Aorta (tissue), 5 donors: ENCODE measurements at regions of chr2 and their contacts with region 1.

Region 1: DNA sequence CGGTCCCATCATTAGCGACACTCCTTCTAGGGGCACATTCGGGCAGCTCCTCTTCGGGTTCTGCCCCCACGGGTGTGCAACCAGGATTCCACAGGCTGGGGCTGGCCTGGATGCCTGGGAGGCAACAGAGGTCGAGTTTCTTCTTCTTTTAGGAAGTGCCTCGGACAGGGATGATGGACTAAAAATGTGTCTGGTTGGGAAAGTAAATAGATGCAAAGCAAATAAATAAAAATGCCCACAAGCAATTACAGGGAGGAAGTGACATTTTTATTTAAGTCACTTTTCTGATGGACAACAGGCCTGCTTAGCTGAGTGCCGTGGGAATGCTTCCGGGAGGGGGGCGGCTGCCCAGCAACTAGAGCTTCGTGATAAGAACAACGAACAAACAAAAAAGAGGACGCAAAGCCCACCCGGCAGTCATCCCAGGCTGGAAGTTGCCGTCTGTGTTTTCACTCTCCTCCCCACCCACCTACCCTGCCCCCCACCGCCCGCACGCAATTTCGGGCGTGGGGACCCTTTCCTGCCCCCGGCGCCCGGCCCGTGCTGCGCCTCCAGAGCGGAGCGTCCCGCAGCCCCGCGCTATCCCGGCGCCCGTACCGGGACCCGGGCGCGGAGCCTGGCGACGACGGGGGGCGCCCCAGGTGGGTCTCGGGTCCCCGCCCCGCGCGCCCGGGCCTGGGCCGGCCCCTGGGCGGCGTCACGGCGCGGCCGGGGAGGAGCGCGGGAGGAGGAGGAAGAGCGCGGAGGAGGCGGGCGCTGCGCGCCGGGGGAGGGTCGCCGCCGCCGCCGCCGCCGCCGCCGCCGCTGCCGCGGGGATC is 412 bp upstream of the NCK2 start:
- DNase-seq: peak; percentile 74 to 90
- ATAC-seq: peak; percentile 90
- H3K4me3 ChIP-seq: peak overlapping the region; percentile 97 to 100
- H3K27ac ChIP-seq: peak overlapping the region; percentile 59 to 67
- H3K4me1 ChIP-seq: peaks cover 0 to 5% of the 10 kb centered on the region in 2 donors
- H3K27me3 ChIP-seq: peaks cover 0 to 1% of the 10 kb centered on the region in 2 donors

Region 2: DNA sequence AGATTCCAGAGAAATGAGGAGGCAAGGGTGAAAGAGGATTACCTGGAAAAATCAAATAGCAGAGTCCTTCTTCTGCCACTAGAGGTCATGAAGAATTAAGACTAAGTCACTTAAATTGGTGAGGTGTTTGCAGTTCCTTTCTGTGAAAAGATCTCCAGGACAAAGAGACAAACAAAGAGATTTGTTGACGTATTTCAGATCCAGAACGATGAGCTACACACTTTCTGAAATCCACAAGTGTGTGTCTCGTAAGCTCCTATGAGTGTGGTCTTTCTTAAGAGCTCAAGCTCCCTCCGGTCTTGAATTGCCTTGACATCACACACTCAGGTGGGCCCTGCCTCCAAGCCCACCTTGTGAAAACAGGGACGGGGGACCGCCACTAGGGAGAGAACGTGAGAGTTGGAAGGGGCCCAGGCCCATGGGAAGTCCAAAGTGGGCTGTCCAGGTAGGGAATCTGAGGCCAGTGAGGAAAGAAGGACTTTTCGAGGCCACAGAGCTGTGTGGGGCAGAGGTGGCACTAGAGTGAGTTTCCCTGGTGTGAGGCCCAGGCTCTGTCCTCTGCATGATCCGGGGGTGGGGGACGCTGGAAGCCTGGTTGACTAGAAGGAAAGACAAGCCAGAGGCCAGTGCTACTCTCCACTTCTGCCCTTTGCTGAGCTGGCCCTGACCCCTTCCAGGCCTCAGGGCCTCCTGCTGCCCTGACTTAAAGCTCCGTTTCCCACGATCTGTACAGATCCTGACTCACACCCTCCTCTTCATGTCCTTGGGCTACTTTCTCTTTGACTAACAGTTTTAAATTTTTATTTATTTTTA is 167.7 kb before region 1 on chr2:
- intact Hi-C with region 1: loop called in 1 of 2 experiments (anchors 10 kb)
- DNase-seq: no peak
- ATAC-seq: peak; percentile 31
- H3K4me3 ChIP-seq: no peak overlapping the region
- H3K27ac ChIP-seq: no peak overlapping the region
- H3K4me1 ChIP-seq: no peaks in the 10 kb centered on the region
- H3K27me3 ChIP-seq: no peaks in the 10 kb centered on the region

Region 3: GRCh38 chr2:105782123-105782522 is 37.8 kb after region 1 on chr2:
- intact Hi-C with region 1: loop called in 1 of 2 experiments (anchors 5 kb)
- DNase-seq: peak in 1 of 2 donors; percentile 57
- ATAC-seq: no peak
- H3K4me3 ChIP-seq: no peak overlapping the region
- H3K27ac ChIP-seq: no peak overlapping the region
- H3K4me1 ChIP-seq: no peaks in the 10 kb centered on the region
- H3K27me3 ChIP-seq: no peaks in the 10 kb centered on the region

Region 4: GRCh38 chr2:105802587-105802986 is 58.3 kb after region 1 on chr2:
- intact Hi-C with region 1: loop called in 1 of 2 experiments (anchors 5 kb)
- DNase-seq: no peak
- ATAC-seq: peak; percentile 17
- H3K4me3 ChIP-seq: no peak overlapping the region
- H3K27ac ChIP-seq: no peak overlapping the region
- H3K4me1 ChIP-seq: peaks cover 3 to 6% of the 10 kb centered on the region in 2 donors
- H3K27me3 ChIP-seq: no peaks in the 10 kb centered on the region

Region 5: DNA sequence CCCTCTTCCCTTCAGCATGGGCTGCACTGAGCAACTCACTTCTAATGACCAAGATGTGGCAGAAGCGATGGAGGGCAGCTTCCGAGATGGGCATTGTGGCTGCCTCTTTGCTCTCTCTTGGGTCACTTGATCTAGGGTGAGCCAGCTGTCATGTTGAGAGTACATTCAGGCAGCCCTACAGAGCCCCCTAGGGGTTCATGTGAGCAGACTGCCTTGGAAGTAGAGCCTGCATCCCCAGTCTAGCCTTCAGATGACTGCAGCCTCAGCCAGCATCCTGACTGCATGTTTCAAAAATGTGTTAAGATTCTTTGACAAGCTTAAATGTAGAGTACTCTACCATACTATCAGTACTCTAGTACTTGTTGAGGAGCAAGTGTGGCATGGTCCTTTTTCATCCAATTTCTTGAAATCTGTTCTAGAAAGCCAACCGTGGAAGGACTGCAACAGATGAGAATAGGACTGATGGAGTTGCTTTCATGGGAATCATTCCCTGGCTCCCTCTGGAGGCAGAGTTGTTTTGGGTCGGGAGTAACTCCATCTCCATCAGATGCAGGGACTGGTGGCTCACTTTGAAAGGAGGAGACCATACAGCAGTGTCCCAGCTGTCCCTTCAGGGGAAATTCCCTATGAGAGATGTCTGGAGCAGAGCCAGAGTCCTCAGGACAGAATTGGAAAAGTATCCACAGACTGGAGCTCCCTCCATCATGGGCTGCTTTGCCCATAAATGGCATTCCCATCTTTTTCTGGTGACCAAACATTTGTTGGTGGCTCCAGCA is 144.5 kb after region 1 on chr2:
- intact Hi-C with region 1: loop called in 1 of 2 experiments (anchors 5 kb)
- DNase-seq: no peak
- ATAC-seq: no peak
- H3K4me3 ChIP-seq: no peak overlapping the region
- H3K27ac ChIP-seq: peak overlapping the region in 1 of 2 donors; percentile 61
- H3K4me1 ChIP-seq: peaks cover 6% of the 10 kb centered on the region in 2 donors
- H3K27me3 ChIP-seq: no peaks in the 10 kb centered on the region